Left colon (tissue), 2 donors: ENCODE measurements at regions of chr17 and their contacts with region 1.

Region 1: DNA sequence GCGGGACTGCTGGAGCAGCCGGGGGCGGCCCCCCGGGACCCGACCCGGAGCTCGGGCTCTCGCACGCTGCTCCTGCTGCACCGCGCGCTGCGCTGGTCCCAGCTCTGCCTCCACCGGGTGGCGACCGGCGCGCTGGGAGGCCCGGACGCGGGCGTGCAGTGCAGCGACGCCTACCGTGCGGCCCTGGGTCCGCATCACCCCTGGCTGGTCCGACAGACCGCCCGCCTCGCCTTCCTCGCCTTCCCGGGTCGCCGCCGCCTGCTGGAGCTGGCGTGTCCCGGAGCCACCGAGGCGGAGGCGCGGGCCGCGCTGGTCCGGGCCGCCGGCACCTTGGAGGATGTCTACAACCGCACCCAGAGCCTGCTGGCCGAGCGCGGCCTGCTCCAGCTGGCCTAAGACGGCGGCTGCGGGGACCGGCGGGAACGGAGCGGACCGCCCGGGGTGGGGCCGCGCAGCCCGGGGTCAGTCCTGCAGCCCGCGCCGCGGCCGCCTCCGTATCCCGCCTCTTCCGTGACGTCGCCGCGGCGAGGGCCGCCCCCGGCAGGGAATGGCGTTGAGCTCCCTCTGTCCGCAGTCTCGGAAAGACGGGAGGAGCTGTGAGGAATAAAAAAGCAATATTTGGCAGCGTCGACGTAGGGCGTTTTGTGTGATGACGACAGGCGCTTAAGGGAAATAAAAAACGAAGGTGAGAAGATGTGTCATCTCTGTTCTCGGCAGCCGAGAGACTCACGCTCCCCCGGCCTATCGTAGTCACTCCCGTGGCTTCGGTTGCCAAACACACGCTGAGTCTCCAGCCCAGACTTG is 1.3 kb downstream of the GLTPD2 start:
- DNase-seq: peak; percentile 84 to 90
- ATAC-seq: peak; percentile 89

Region 2: GRCh38 chr17:4739122-4740024 is 50.7 kb before region 1 on chr17 and contains the starts of genes CXCL16 and ZMYND15:
- intact Hi-C with region 1: loop called in 1 of 2 experiments (anchors 10 kb)
- DNase-seq: peak; percentile 71 to 80
- ATAC-seq: peak; percentile 77
- total RNA-seq, gene CXCL16: 36.2 to 52.3 TPM
- total RNA-seq, gene ZMYND15: 1.1 to 1.9 TPM

Region 3: DNA sequence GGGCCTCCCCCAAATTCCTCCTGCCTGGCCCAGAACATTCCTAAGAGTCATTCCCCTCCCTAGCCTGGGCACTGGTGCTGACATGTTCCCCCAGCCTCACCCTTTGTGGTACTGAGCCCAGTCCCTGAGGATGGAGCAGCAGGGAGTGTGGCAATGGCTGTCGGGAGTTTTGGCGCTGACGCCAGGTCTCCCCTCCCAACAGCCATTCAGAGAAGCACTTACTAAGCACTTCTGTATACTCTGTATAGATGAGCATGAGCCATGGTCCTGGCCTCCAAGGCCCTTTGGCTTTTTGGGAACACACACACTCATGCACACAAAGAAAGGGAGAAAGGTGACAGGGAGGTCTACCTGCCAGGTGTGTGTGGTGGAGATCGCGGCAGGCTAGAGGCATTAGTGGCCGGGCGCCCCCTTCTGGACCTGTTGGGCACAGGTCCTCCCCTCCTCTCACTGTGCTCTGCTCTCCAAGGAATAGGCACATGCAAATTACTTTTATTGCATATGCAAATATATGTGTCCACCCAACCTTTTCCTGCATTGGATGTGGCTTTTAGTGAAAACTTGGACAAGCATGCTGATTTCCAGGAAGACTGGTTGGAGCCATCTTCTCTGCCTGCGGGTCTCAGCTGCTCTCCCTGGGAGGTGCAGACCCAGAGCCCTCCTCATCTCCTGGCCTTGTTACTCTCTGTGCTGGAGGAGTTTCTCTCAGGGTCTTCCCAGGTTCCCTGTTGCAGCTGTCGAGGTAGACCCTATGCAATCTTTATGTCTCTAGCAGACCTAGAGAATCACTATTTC is 91.9 kb after region 1 on chr17:
- intact Hi-C with region 1: loop called (anchors 5 to 10 kb)
- DNase-seq: peak in 1 of 2 donors; percentile 81
- ATAC-seq: peak; percentile 94